A549 (cell line): ENCODE measurements at regions of chr10 and their contacts with region 1.

Region 1: GRCh38 chr10:102399217-102400089 is 3.9 kb downstream of the NFKB2 start:
- DNase-seq: peak; percentile 79 to 90
- ATAC-seq: peak; percentile 39 to 62
- H3K4me3 ChIP-seq: peak overlapping the region; percentile 48
- H3K27ac ChIP-seq: peak overlapping the region; percentile 82 to 86
- H3K4me1 ChIP-seq: peaks cover 41% of the 10 kb centered on the region
- CTCF ChIP-seq: peak; percentile 97
- EP300 ChIP-seq: no peak
- POLR2A ChIP-seq: peak; percentile 58
- RAD21 ChIP-seq: peak; percentile 60 to 76; a peak in 4 of 5 replicates

Region 2: GRCh38 chr10:102167861-102168260 is 231.6 kb before region 1 on chr10:
- CTCF ChIA-PET with region 1: interaction called, 13 read pairs
- POLR2A ChIA-PET with region 1: no interaction called
- DNase-seq: no peak
- ATAC-seq: 0 out of 6 replicates have a peak, but pooled peaks of 1 of the 2 experiments have one; percentile 12
- H3K4me3 ChIP-seq: no peak overlapping the region
- H3K27ac ChIP-seq: no peak overlapping the region
- H3K4me1 ChIP-seq: peaks cover 3% of the 10 kb centered on the region; the same call in 1 of the 3 replicates
- CTCF ChIP-seq: no peak
- EP300 ChIP-seq: no peak
- POLR2A ChIP-seq: no peak
- RAD21 ChIP-seq: no peak

Region 3: DNA sequence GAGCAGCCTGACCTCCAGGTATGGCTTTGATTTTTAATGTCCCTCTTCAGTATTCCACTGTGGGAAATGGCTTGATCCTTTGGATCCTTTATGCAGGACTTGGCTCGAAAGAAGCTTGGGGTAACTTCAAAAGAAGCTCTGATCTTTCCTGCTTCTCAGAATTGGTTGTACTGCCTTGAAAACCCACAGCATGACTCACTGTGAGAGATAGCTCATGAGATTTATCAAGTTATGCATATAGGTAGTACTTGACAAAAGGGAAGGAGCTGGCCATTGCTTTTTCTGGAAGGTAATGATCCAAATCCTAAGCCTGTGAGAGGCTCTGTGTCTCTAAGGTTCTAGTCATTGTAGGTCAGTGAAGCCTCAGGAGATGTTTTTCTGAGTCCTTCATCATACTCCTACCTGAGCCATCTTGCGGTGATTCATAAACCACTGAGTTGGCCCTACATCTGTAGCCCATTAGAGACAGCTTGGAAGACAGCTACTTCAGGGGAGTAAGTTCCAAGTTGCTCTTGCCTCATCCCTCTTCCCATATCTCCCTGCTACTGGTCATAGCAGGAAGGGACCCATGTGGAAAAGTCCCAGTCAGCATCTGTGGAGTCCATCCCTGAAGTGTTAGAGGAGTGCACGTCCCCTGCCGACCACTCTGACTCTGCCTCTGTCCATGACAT is 40.6 kb before region 1 on chr10:
- CTCF ChIA-PET with region 1: interaction called, 12 read pairs
- POLR2A ChIA-PET with region 1: no interaction called
- DNase-seq: no peak
- ATAC-seq: no peak
- H3K4me3 ChIP-seq: no peak overlapping the region
- H3K27ac ChIP-seq: no peak overlapping the region
- H3K4me1 ChIP-seq: no peaks in the 10 kb centered on the region
- CTCF ChIP-seq: no peak
- EP300 ChIP-seq: no peak
- POLR2A ChIP-seq: no peak
- RAD21 ChIP-seq: no peak

Region 4: DNA sequence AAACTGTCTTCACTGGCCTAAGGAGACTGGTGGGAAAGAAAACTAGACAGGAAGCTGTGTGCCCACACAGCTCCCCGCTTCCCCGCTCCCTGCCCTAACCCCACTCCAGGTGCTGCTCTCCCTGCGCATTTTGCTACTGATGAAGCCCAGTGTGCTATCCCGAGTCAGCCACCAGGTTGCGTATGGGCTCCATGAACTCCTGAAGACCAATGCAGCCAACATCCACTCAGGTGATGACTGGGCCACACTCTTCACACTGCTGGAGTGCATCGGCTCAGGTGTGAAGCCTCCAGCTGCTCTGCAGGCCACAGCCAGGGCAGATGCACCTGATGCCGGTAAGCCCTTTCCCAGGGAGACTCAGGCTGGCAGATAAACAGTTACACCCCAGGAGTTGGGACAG is 24.2 kb before region 1 on chr10:
- CTCF ChIA-PET with region 1: interaction called, 133 read pairs
- POLR2A ChIA-PET with region 1: no interaction called
- DNase-seq: no peak
- ATAC-seq: peak; percentile 62 to 70; a peak in 4 of 6 replicates
- H3K4me3 ChIP-seq: no peak overlapping the region
- H3K27ac ChIP-seq: no peak overlapping the region
- H3K4me1 ChIP-seq: no peaks in the 10 kb centered on the region
- CTCF ChIP-seq: no peak
- EP300 ChIP-seq: no peak
- POLR2A ChIP-seq: no peak
- RAD21 ChIP-seq: peak in 1 of 2 experiments; percentile 24; a peak in 1 of 5 replicates

Region 5: GRCh38 chr10:102384053-102384452 is 15.4 kb before region 1 on chr10:
- CTCF ChIA-PET with region 1: interaction called, 133 read pairs
- POLR2A ChIA-PET with region 1: interaction called, 4 read pairs
- DNase-seq: no peak
- ATAC-seq: peak in 1 of 2 experiments; percentile 63; a peak in 3 of 6 replicates
- H3K4me3 ChIP-seq: no peak overlapping the region
- H3K27ac ChIP-seq: no peak overlapping the region
- H3K4me1 ChIP-seq: no peaks in the 10 kb centered on the region
- CTCF ChIP-seq: no peak
- EP300 ChIP-seq: no peak
- POLR2A ChIP-seq: no peak
- RAD21 ChIP-seq: no peak

Region 6: DNA sequence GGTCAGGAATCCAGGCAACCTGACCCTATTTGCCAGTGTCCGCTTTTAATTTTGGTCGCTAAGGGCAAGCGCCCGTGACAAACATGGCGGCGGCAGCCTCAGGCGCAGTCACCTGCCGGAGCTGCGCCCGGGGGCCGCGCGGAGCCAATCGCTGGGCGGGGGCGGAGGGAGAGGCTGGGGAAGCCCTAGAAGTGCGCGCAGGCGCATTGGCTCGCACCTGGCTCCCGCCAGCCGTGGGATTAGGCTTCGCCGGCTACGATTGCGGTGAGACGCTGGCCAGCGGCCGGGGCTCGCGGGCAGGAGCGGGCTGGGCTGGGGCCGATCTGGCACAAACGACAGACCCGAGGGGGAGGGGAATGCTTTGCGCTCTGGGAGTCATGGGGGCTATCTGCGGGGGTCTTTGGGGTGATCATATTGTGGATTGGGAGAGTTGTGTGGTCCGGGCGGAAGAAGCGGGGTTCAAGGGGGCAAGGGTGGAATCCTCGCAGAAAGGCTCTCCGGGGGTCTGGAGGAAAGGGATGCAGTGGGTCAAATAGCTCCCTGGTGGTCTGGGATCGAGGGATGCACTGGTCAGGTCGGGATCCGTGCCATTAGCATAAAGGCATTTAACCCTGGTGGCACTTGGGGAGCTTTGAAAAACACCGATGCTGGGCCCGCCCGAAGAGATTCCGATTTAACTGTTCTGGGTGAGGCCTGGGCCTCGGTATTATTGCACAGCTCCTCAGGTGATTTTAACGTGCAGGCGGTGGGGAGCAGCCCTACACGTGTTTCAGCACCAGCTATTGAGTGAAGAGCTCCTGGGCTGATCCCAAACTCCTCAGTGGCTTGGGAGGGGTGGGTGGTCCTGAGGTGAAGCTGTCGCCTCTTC is 62.0 kb after region 1 on chr10:
- CTCF ChIA-PET with region 1: interaction called, 24 read pairs
- POLR2A ChIA-PET with region 1: interaction called, 4 read pairs
- DNase-seq: peak; percentile 87 to 98
- ATAC-seq: peak; percentile 90 to 97
- H3K4me3 ChIP-seq: peak overlapping the region; percentile 58
- H3K27ac ChIP-seq: peak overlapping the region; percentile 77 to 84
- H3K4me1 ChIP-seq: peaks cover 12% of the 10 kb centered on the region
- CTCF ChIP-seq: no peak
- EP300 ChIP-seq: no peak
- POLR2A ChIP-seq: peak; percentile 67
- RAD21 ChIP-seq: no peak

Region 7: GRCh38 chr10:102511583-102512274 is 112.3 kb after region 1 on chr10:
- CTCF ChIA-PET with region 1: no interaction called
- POLR2A ChIA-PET with region 1: no interaction called
- DNase-seq: no peak
- ATAC-seq: no peak
- H3K4me3 ChIP-seq: no peak overlapping the region
- H3K27ac ChIP-seq: no peak overlapping the region
- H3K4me1 ChIP-seq: 0 out of 3 replicates have a peak, but pooled peaks cover 3% of the 10 kb centered on the region
- CTCF ChIP-seq: no peak
- EP300 ChIP-seq: no peak
- POLR2A ChIP-seq: no peak
- RAD21 ChIP-seq: no peak

Region 8: GRCh38 chr10:102537367-102537766 is 137.9 kb after region 1 on chr10:
- CTCF ChIA-PET with region 1: no interaction called
- POLR2A ChIA-PET with region 1: no interaction called
- DNase-seq: no peak
- ATAC-seq: no peak
- H3K4me3 ChIP-seq: no peak overlapping the region
- H3K27ac ChIP-seq: no peak overlapping the region
- H3K4me1 ChIP-seq: peaks cover 2% of the 10 kb centered on the region; the same call in 1 of the 3 replicates
- CTCF ChIP-seq: no peak
- EP300 ChIP-seq: no peak
- POLR2A ChIP-seq: no peak
- RAD21 ChIP-seq: no peak